ENCODE measurements at regions of chr17 and their contacts with region 1.

Region 1: DNA sequence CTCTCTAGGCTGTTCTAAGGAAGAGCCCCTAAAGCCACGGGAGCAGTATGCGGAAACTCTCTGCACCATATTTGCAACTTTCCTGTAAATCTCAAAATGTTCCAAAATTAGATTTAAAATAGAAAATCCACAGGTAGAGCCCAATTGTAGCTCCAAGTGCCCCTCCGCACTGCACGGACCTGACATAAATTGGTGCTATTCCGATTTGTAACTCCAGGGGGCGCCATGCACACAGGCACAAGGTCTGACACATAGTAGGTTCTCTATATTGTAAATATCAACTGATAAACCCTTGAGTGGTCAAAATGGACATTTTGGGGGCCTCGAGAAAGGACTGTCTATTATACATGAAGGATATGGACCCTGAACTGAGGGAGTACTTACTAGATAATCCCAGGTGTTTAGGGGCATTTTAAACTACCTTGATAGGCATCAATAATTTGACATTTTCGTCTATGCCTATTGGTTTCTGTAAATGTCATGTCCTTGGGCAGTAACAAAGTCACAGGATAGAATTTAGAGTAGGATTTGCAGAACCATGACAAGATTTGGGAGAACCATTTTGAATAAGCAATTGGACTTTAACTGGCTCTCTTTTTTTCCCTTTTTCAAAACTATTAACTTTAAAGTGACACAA is 36.6 kb upstream of the TMEM132E start:
- DNase-seq: peak; percentile 25
- H3K4me3 ChIP-seq: no peak overlapping the region
- H3K27ac ChIP-seq: no peak overlapping the region
- H3K4me1 ChIP-seq: no peaks in the 10 kb centered on the region
- H3K27me3 ChIP-seq: peaks cover 24% of the 10 kb centered on the region
- CTCF ChIP-seq: peak; percentile 65 to 77 (median 75)
- EP300 ChIP-seq: no peak
- POLR2A ChIP-seq: no peak

Region 2: GRCh38 chr17:34443619-34444469 is 99.0 kb before region 1 on chr17:
- in situ Hi-C with region 1: loop called in 1 of 4 experiments (anchors 25 kb)
- intact Hi-C with region 1: no loop called
- DNase-seq: no peak
- H3K4me3 ChIP-seq: no peak overlapping the region
- H3K27ac ChIP-seq: no peak overlapping the region
- H3K4me1 ChIP-seq: no peaks in the 10 kb centered on the region
- H3K27me3 ChIP-seq: peaks cover 16% of the 10 kb centered on the region
- CTCF ChIP-seq: no peak
- EP300 ChIP-seq: no peak
- POLR2A ChIP-seq: no peak

Region 3: GRCh38 chr17:34974794-34975785 is 432.3 kb after region 1 on chr17:
- in situ Hi-C with region 1: no loop called
- intact Hi-C with region 1: no loop called
- DNase-seq: no peak
- H3K4me3 ChIP-seq: no peak overlapping the region
- H3K27ac ChIP-seq: no peak overlapping the region
- H3K4me1 ChIP-seq: peaks cover 0 to 9% (median 2%) of the 10 kb centered on the region in 4 donors
- H3K27me3 ChIP-seq: no peaks in the 10 kb centered on the region
- CTCF ChIP-seq: no peak
- EP300 ChIP-seq: no peak
- POLR2A ChIP-seq: no peak